Tibial artery (tissue), 4 donors: ENCODE measurements at regions of chrX and their contacts with region 1.

Region 1: DNA sequence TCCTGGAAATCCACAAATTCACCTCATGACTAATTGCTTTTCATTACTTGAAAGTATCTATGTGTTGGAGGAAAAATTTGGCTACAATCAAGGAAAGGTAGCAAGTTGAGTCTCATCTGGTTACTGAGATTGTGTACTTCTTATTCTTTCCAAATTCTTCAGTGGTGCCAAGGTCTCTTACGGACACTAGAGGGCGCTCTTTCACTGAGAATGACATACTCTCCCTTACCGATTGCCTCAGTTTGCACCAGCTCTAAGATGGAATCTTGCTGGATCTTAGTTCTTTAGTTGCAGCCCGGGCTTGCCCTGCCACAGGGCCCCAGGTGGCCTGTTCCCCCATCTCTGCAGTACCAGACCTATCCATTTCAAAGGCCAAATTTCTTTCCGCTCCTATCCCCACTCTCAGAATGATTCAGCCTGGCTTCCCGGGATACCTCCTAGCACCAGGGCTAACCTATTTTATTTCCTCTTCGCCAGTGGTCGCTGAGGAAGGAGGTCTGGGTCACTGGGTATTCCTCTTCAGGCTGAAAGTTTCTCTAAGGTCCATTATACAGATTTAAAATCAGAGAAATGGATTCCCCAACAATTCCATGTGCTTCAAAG is 24.6 kb upstream of the GPR50 start:
- DNase-seq: peak in 1 of 2 donors; percentile 21
- H3K4me3 ChIP-seq: no peak overlapping the region
- H3K27ac ChIP-seq: no peak overlapping the region
- H3K4me1 ChIP-seq: no peaks in the 10 kb centered on the region
- H3K27me3 ChIP-seq: no peaks in the 10 kb centered on the region
- CTCF ChIP-seq: peak; percentile 45 to 52

Region 2: DNA sequence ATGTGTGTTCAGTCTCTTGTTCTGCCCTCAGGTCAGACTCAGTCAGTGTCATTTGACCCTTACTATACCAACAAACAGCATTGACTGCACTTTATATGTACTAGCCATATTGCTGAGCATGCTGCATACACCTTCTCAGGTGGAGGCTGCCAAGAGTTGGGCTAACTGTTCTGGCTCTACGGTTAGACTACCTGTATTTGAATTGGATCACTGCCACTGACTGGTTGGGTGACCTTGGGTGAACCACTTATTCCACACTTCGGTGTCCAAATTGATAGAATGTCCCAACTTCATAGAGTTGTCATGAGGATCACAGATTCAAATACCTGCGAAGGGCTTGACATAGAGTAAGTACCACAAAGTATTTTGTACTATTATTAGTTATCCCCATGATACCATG is 66.6 kb before region 1 on chrX:
- intact Hi-C with region 1: no loop called
- DNase-seq: no peak
- H3K4me3 ChIP-seq: no peak overlapping the region
- H3K27ac ChIP-seq: no peak overlapping the region
- H3K4me1 ChIP-seq: peaks cover 0 to 5% (median 0%) of the 10 kb centered on the region in 4 donors
- H3K27me3 ChIP-seq: no peaks in the 10 kb centered on the region
- CTCF ChIP-seq: no peak

Region 3: DNA sequence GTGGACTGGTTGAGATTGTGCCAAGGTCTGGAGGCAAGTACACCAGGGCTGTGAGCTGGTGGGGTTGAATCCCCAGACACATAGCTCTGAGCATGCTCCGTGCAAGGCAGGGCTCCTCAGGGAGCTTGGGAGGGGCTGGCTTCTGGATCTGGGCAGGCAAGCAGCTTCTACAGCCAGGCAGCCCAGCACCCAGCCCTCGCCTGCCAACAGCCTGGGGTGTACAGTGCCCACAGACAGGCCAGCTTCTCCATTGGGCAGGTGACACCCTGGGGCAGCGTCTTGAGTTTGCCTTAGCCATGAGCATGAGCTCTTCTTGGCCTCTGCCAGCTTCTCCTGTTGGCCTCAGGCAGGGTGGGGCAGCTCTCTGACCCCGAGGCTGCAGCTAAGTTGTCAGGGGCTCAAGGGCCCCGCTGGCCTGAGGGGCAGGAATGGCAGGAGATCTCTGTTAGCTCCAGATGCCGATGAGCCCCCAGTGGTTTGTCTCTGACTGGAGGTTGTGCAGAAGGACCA is 574.9 kb after region 1 on chrX:
- intact Hi-C with region 1: loop called (anchors 2 kb)
- DNase-seq: no peak
- H3K4me3 ChIP-seq: no peak overlapping the region
- H3K27ac ChIP-seq: no peak overlapping the region
- H3K4me1 ChIP-seq: no peaks in the 10 kb centered on the region
- H3K27me3 ChIP-seq: no peaks in the 10 kb centered on the region
- CTCF ChIP-seq: no peak